HEK293T (cell line): ENCODE measurements at regions of chr11 and their contacts with region 1.

Region 1: DNA sequence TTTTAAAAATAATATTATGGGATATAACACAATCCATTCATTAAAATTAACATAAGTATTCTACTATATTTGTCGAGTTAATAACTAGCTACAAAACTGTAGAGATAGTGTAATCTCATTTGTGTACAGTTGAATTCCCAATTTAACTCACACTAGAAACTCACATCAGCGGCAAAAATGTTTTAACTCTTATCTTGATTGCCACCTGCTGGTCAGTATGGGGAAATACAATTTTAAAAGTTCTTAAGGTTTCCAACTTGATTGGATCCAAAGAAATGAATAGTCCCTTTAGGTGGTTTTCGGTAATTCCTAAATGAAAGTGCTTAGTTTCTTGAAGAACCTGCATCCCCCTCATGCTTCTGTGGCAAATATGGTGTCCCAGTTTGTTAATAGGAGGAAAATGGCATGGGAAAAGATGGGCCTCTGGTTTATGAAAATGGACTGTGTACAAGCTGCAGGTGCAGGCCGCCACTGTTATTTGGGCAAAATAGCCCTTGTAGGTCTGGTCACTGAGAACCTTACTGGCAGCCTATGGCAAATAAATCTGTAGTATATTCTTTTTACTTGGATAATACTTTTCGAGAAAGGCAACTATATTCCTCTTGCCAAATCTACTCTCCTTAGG is 33.7 kb upstream of the SLC17A6 start:
- DNase-seq: peak; percentile 9

Region 2: DNA sequence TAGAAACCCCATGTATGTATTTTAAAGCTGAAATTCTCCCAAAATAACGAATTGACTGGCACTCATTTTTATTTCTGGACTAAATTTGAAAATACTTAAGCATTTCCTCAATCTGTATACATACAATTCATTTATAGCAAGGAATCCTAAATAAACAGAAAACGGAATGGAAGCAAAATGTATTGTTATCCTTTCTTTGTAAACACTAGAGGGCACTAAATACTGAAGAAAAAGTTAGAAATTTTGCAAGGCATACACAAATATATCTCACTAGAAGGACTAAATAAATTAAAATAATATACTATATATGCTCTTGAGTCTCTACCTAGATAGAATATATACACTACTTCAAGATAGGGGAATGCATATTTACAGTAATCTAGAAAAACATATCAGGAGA is 134.6 kb before region 1 on chr11:
- CTCF ChIA-PET with region 1: interaction called, 12 read pairs
- POLR2A ChIA-PET with region 1: no interaction called
- DNase-seq: no peak